HEK293 (cell line): ENCODE measurements at regions of chr2 and their contacts with region 1.

Region 1: GRCh38 chr2:9770308-9771100 is 72.8 kb upstream of the TAF1B start:
- H3K4me3 ChIP-seq: no peak overlapping the region
- H3K27ac ChIP-seq: no peak overlapping the region
- H3K4me1 ChIP-seq: no peaks in the 10 kb centered on the region
- CTCF ChIP-seq: 0 out of 2 replicates have a peak, but pooled peaks have one; percentile 39

Region 2: DNA sequence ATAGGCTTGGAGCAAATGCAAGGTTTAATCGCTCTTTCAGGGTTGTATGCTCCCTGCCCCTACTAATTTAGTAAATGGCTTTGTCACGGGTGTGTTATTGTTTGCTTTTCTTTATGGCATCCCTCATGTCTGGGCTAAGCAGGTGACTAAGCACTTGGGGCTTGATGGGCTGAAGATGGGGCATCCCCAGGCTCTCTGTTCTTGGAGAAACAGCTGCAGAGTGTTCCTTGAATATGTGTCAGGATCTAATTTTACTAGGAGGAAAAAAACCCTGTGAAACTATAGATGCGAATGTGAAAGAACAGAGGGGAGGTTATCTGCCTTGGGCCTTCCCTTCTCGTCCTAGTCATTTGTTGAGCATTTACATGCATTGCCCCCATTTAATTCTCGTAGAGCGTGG is 21.9 kb before region 1 on chr2:
- CTCF ChIA-PET with region 1: interaction called, 15 read pairs
- POLR2A ChIA-PET with region 1: no interaction called
- H3K4me3 ChIP-seq: no peak overlapping the region
- H3K27ac ChIP-seq: no peak overlapping the region
- H3K4me1 ChIP-seq: no peaks in the 10 kb centered on the region
- CTCF ChIP-seq: no peak

Region 3: DNA sequence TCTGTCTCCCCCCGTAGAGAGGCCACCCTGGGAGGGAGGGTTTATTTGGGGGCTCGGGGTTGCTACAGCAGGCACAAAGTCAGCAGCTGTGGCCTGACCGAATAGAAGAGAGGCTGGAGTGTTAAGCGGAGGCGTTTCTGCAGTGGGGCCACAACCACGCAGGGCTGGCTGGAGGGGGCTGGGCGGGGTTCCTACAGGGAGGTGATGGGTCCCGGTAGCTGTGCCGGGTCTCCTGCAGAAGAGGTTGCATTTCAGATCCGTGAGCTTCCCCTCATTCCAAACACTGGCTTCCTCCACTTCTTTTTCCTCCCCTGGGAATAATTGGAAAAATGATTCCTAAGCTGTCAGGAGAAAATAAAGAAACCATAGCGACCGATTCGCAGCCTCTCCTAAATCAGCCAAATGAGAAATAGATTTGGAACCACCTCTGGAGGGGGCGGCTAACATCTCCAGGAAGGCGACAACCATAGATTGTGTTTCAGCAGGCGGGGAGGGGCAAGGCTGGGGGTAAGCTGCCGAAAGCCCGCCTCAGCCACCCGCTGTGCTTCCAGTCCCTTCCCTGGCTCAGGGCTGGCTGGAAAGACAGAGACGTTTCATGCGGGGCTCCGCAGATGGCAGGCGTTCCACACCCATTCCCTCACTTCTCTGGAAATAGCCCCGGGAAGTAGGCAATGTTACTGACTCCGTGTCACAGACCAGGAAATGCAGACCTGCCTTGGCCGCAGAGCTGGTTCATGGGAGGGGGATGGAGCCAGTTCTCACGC is 12.8 kb before region 1 on chr2:
- CTCF ChIA-PET with region 1: interaction called, 25 read pairs
- POLR2A ChIA-PET with region 1: interaction called, 4 read pairs
- H3K4me3 ChIP-seq: no peak overlapping the region
- H3K27ac ChIP-seq: no peak overlapping the region
- H3K4me1 ChIP-seq: no peaks in the 10 kb centered on the region
- CTCF ChIP-seq: no peak

Region 4: DNA sequence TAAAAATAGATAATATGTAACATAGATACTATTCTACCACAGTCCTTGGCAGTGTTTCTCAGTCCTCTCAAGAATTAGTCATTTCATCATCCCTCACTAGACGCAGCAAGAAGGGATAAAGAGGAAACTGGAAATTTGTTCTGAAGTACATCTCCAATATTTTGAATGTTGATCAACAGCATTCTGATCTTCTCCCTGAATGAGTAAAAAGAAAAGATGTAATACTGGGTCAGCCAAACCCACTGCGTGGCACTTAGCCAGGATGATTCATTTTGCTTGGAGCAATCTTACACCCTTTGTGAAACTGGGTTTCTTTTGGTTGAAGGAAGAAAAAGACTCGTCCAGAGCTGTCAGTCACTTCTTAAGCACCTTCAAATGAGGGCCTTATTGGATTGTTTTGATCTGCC is 126.8 kb after region 1 on chr2:
- CTCF ChIA-PET with region 1: no interaction called
- POLR2A ChIA-PET with region 1: no interaction called
- H3K4me3 ChIP-seq: no peak overlapping the region
- H3K27ac ChIP-seq: no peak overlapping the region
- H3K4me1 ChIP-seq: peaks cover 24% of the 10 kb centered on the region
- CTCF ChIP-seq: no peak